Mammary epithelial cell (primary cell): ENCODE measurements at regions of chr5 and their contacts with region 1.

Region 1: DNA sequence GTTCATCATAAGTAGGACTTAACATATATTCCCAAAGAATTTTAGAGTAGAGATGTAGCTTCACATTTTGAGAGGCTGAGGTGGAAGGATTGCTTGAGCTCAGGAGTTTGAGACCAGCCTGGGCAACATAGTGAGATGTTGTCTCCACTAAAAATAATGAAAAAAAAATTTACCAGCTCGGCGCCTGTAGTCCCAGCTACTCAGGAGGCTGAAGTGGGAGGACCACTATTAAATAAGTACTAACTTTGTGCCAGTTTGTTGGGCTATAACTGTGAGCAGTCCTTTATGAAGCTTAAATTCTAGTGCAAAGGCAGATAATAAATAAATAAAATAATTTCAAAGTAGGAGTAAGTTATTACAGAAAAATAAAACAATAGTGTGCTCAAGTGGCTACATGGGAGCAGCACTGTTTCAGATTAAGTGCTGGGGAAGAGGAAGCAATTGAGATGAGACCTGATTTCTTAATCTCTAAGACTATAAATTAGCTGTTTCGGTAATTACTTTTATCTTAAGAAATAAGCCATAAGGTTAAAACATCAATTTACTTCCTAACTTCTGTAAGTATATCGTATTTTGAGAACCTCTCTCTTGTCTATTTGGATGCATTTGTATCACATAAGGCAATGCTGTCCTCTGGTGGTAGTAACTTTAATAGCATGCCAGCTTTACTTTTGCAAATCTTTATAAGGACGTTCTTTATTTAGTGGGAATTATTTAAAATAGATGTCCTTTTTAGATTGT is 98.9 kb downstream of the CSNK1G3 start:
- DNase-seq: peak; percentile 42
- H3K4me3 ChIP-seq: no peak overlapping the region
- H3K27ac ChIP-seq: no peak overlapping the region
- H3K4me1 ChIP-seq: no peaks in the 10 kb centered on the region
- H3K27me3 ChIP-seq: no peaks in the 10 kb centered on the region
- CTCF ChIP-seq: peak; percentile 94 to 99

Region 2: GRCh38 chr5:122500245-122501075 is 1110.4 kb before region 1 on chr5:
- CTCF ChIA-PET with region 1: no interaction called
- dilution Hi-C with region 1: no loop called
- in situ Hi-C with region 1: no loop called
- intact Hi-C with region 1: loop called (anchors 5 kb)
- DNase-seq: peak; percentile 30
- H3K4me3 ChIP-seq: no peak overlapping the region
- H3K27ac ChIP-seq: no peak overlapping the region
- H3K4me1 ChIP-seq: no peaks in the 10 kb centered on the region
- H3K27me3 ChIP-seq: no peaks in the 10 kb centered on the region
- CTCF ChIP-seq: peak; percentile 49 to 62

Region 3: GRCh38 chr5:123423278-123424149 is 187.3 kb before region 1 on chr5 and contains the start of gene CEP120:
- CTCF ChIA-PET with region 1: interaction called, 6 read pairs
- dilution Hi-C with region 1: no loop called
- in situ Hi-C with region 1: loop called (anchors 25 kb)
- intact Hi-C with region 1: loop called (anchors 1 kb)
- DNase-seq: peak; percentile 99
- H3K4me3 ChIP-seq: peak within 1 kb of the TSS; percentile 74 to 85 (median 83)
- H3K27ac ChIP-seq: peak within 1 kb of the TSS; percentile 93
- H3K4me1 ChIP-seq: peaks cover 15% of the 10 kb centered on the region
- H3K27me3 ChIP-seq: no peaks in the 10 kb centered on the region
- CTCF ChIP-seq: peak; percentile 73 to 80
- total RNA-seq, gene CEP120: 20.7 to 24.6 TPM

Region 4: GRCh38 chr5:123511648-123512605 is 98.9 kb before region 1 on chr5 and contains the start of gene CSNK1G3:
- CTCF ChIA-PET with region 1: no interaction called
- dilution Hi-C with region 1: no loop called
- in situ Hi-C with region 1: no loop called
- intact Hi-C with region 1: loop called (anchors 5 kb)
- DNase-seq: peak; percentile 97
- H3K4me3 ChIP-seq: peak within 1 kb of the TSS; percentile 62 to 94 (median 92)
- H3K27ac ChIP-seq: peak within 1 kb of the TSS; percentile 89
- H3K4me1 ChIP-seq: peaks cover 17% of the 10 kb centered on the region
- H3K27me3 ChIP-seq: no peaks in the 10 kb centered on the region
- CTCF ChIP-seq: no peak
- total RNA-seq, gene CSNK1G3: 50.6 to 59.2 TPM